Left cardiac atrium (tissue), 4 donors: ENCODE measurements at regions of chr10 and their contacts with region 1.

Region 1: DNA sequence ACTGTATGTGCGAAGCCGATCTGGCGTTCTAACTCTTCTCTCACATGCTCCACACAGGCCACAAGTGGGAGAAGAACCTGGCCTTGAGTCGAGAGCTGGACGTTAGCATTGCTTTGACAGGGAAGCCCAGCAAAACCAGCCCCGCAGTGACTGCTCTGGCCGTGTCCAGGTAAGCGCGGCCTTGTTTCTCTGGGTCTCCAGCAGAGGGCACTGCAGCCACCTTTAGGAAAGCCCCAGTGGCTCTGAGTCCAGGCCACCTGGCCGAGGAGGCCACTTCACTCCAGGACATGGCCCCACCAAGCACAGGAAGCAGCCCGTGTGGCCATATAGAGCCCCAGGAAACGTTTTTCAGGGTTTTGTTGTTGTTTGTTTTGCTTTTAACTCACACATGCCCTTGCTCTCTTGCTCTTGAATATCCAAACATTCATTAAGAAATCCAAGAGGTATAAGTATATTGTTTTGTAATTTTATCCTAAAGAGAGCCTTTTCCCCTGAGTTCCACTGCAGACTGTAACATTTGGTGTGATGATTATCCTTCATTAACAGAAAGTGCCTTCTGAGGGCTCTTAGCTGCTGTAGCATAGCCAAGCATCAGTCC is 41.8 kb upstream of the LRRC18 start:
- DNase-seq: peak; percentile 72
- ATAC-seq: peak; percentile 88

Region 2: DNA sequence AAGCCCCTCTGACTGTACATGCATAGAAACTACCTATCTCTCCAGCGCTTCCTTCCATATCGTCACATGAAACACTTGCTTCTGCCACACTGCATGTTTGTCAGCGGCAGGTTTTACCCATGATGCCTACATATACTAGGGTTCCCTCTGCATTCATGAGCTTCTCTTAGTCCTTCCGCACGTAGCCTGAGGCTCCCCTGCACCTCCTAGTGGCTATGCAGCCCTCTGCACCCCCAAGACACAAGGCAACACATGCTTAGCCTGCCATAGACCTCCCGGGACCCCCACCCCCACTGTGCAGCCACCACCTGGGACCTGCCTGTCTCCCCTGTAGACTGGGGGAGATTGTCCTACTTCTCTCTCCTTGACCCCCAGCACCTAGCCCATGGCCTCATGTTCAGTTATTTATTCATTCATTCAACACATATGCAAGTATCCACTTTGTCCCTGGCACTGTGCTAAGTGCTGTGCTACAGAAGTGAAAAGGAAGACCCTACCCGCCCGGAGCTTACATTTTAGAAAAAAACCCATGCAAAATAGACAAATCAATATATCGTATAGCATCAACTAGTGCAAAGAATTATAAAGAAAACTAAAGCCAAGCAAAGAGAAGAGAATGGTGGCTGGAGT is 183.3 kb after region 1 on chr10:
- intact Hi-C with region 1: loop called (anchors 2 to 5 kb)
- DNase-seq: no peak
- ATAC-seq: peak; percentile 69 to 80

Region 3: DNA sequence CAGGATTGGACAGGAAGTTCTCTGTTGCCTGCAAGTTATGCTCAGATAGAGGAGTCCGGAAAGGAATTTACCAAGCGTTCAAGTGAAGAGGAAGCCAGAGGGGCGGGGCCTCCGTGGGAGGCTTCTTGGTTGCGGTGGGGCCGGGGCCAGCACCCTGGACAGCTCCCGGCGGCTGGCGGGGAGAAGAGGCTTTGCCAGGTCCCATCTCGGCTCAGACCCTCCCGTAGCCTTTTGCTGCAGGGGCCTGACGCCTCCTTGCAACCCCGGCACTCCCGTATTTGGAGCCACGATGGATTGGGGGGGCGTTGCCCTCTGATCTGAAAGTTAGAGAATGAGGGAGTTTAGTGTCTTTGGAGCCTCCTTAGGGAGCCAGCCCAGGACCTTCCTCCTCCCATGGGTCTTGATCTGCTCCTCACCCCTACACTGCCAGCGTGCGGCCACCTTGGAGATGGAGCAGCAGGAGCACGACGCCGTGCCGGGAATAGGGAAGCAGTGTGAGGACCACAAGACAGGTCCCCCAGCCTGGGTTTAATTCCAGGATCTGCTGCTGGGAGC is 625.6 kb after region 1 on chr10:
- intact Hi-C with region 1: no loop called
- DNase-seq: peak; percentile 74
- ATAC-seq: peak; percentile 79 to 81